ENCODE measurements at regions of chr3 and their contacts with region 1.

Region 1: DNA sequence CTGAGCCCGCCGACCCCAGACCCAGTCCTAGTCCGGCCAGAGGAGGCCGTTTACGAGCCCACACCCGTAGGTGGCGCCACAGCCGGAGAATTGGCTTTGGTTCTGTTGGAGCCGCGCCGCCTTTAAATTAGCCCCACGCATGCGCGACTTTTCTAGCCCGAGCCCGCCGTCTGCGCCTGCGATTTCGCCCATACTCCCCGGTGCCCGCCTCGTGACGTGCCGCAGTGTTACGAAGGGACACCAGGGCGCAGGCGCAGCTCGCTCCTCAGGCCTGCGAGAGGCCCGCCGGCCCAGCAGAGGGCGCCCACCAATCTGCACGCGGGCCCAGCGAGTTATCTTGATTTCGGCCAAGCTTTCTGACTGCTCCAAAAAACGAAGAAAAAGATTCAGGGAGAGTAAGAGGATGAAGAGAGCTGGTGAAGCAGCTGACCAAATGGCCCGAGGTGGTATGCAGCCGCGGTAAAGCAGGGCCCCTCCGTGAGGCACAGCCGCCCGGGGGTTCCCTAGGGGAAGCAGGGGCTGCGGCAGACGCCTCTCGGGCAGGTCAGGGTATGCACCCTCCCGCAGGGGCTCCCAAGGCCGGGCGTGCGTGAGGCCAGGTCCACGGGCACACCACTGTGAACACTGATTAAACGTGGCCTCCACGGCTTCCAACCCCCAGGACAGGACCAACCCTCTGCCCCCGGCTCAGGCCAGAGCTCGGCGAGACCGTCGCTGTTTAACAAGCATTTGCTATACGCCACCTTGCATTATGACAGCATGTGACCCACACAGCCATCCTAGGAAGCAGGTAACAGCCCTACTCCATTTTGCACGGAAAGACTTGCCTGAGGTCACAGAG is 32.8 kb downstream of the RPN1 start:
- DNase-seq: peak; percentile 99
- H3K4me3 ChIP-seq: peak overlapping the region; percentile 87
- H3K4me3 Mint-ChIP-seq: peak overlapping the region; percentile 87 to 97 (median 96)
- H3K27ac ChIP-seq: peak overlapping the region; percentile 73
- H3K27ac Mint-ChIP-seq: peak overlapping the region; percentile 79 to 97 (median 97)
- H3K4me1 ChIP-seq: peaks cover 21% of the 10 kb centered on the region
- H3K4me1 Mint-ChIP-seq: peaks cover 18 to 33% (median 22%) of the 10 kb centered on the region in 3 donors
- H3K27me3 ChIP-seq: no peaks in the 10 kb centered on the region
- H3K27me3 Mint-ChIP-seq: no peaks in the 10 kb centered on the region

Region 2: GRCh38 chr3:128629936-128630335 is 12.2 kb after region 1 on chr3:
- CTCF ChIA-PET with region 1: interaction called, 16 read pairs
- POLR2A ChIA-PET with region 1: no interaction called
- DNase-seq: no peak
- H3K4me3 ChIP-seq: no peak overlapping the region
- H3K4me3 Mint-ChIP-seq: no peak overlapping the region
- H3K27ac ChIP-seq: no peak overlapping the region
- H3K27ac Mint-ChIP-seq: peak overlapping the region in 3 of 8 donors; percentile 21 to 60 (median 50)
- H3K4me1 ChIP-seq: no peaks in the 10 kb centered on the region
- H3K4me1 Mint-ChIP-seq: peaks cover 3 to 14% (median 12%) of the 10 kb centered on the region in 3 donors
- H3K27me3 ChIP-seq: no peaks in the 10 kb centered on the region
- H3K27me3 Mint-ChIP-seq: no peaks in the 10 kb centered on the region

Region 3: GRCh38 chr3:128655531-128655930 is 37.8 kb after region 1 on chr3:
- CTCF ChIA-PET with region 1: interaction called, 16 read pairs
- POLR2A ChIA-PET with region 1: interaction called, 11 read pairs
- DNase-seq: no peak
- H3K4me3 ChIP-seq: no peak overlapping the region
- H3K4me3 Mint-ChIP-seq: peak overlapping the region in 6 of 7 donors; percentile 30 to 92 (median 52)
- H3K27ac ChIP-seq: no peak overlapping the region
- H3K27ac Mint-ChIP-seq: peak overlapping the region in 1 of 8 donors; percentile 83
- H3K4me1 ChIP-seq: peaks cover 6% of the 10 kb centered on the region
- H3K4me1 Mint-ChIP-seq: peaks cover 9 to 26% (median 9%) of the 10 kb centered on the region in 3 donors
- H3K27me3 ChIP-seq: no peaks in the 10 kb centered on the region
- H3K27me3 Mint-ChIP-seq: peaks cover 2 to 3% of the 10 kb centered on the region in 2 donors

Region 4: DNA sequence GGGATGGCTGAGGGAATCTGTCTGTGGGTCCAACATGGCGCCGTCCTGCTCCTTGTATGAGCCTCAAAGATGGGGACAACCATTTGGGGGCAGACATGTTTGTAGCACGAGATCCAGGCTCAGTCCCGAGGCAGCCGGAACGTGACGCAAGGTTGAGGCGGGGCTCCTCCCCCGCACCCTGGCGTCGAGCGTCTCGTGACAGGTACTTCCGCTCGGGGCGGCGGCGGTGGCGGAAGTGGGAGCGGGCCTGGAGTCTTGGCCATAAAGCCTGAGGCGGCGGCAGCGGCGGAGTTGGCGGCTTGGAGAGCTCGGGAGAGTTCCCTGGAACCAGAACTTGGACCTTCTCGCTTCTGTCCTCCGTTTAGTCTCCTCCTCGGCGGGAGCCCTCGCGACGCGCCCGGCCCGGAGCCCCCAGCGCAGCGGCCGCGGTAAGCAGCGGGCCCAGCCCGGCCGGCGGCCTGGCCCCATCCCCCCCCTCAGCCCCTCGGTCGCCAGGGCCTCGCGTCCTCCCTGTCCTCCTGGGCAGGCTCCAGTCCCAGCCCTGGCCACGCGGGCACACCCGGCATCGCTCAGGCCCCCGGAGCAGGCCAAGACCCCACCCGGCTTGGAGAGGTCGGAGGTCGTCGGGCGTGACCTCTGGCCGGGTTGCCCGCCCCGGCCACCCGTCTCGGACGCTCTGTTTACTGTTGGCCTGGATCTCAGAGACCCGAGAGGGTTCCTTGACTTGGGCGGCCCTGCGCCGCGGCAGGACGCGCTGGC is 108.3 kb after region 1 on chr3 and contains the start of gene RAB7A:
- CTCF ChIA-PET with region 1: interaction called, 12 read pairs
- POLR2A ChIA-PET with region 1: interaction called, 5 read pairs
- DNase-seq: peak; percentile 95 to 98 (median 96)
- H3K4me3 ChIP-seq: peak within 1 kb of the TSS; percentile 91
- H3K4me3 Mint-ChIP-seq: peak within 1 kb of the TSS; percentile 89 to 99 (median 97)
- H3K27ac ChIP-seq: peak within 1 kb of the TSS; percentile 92
- H3K27ac Mint-ChIP-seq: peak within 1 kb of the TSS; percentile 86 to 99 (median 96)
- H3K4me1 ChIP-seq: peaks cover 50% of the 10 kb centered on the region
- H3K4me1 Mint-ChIP-seq: peaks cover 46 to 58% (median 56%) of the 10 kb centered on the region in 3 donors
- H3K27me3 ChIP-seq: no peaks in the 10 kb centered on the region
- H3K27me3 Mint-ChIP-seq: peaks cover 0 to 8% of the 10 kb centered on the region in 2 donors
- total RNA-seq, gene RAB7A: 260 to 285 TPM

Region 5: GRCh38 chr3:128804017-128804810 is 186.4 kb after region 1 on chr3:
- CTCF ChIA-PET with region 1: interaction called, 12 read pairs
- POLR2A ChIA-PET with region 1: no interaction called
- DNase-seq: peak; percentile 22 to 82 (median 64)
- H3K4me3 ChIP-seq: peak overlapping the region; percentile 40
- H3K4me3 Mint-ChIP-seq: peak overlapping the region; percentile 61 to 92 (median 83)
- H3K27ac ChIP-seq: peak overlapping the region; percentile 64
- H3K27ac Mint-ChIP-seq: peak overlapping the region; percentile 86 to 98 (median 92)
- H3K4me1 ChIP-seq: peaks cover 72% of the 10 kb centered on the region
- H3K4me1 Mint-ChIP-seq: peaks cover 58 to 80% (median 74%) of the 10 kb centered on the region in 3 donors
- H3K27me3 ChIP-seq: no peaks in the 10 kb centered on the region
- H3K27me3 Mint-ChIP-seq: no peaks in the 10 kb centered on the region

Region 6: GRCh38 chr3:128879125-128879969 is 261.6 kb after region 1 on chr3 and contains the start of gene ACAD9:
- CTCF ChIA-PET with region 1: interaction called, 24 read pairs
- POLR2A ChIA-PET with region 1: interaction called, 3 read pairs
- DNase-seq: peak; percentile 94 to 99 (median 96)
- H3K4me3 ChIP-seq: peak within 1 kb of the TSS; percentile 84
- H3K4me3 Mint-ChIP-seq: peak within 1 kb of the TSS; percentile 84 to 97 (median 87)
- H3K27ac ChIP-seq: peak within 1 kb of the TSS; percentile 93
- H3K27ac Mint-ChIP-seq: peak within 1 kb of the TSS; percentile 96 to 100 (median 98)
- H3K4me1 ChIP-seq: peaks cover 40% of the 10 kb centered on the region
- H3K4me1 Mint-ChIP-seq: peaks cover 51 to 74% (median 70%) of the 10 kb centered on the region in 3 donors
- H3K27me3 ChIP-seq: no peaks in the 10 kb centered on the region
- H3K27me3 Mint-ChIP-seq: no peaks in the 10 kb centered on the region
- total RNA-seq, gene ACAD9: 50.5 to 51.2 TPM